Naive thymus-derived CD4-positive, alpha-beta T cell (primary cell): ENCODE measurements at regions of chr2 and their contacts with region 1.

Region 1: DNA sequence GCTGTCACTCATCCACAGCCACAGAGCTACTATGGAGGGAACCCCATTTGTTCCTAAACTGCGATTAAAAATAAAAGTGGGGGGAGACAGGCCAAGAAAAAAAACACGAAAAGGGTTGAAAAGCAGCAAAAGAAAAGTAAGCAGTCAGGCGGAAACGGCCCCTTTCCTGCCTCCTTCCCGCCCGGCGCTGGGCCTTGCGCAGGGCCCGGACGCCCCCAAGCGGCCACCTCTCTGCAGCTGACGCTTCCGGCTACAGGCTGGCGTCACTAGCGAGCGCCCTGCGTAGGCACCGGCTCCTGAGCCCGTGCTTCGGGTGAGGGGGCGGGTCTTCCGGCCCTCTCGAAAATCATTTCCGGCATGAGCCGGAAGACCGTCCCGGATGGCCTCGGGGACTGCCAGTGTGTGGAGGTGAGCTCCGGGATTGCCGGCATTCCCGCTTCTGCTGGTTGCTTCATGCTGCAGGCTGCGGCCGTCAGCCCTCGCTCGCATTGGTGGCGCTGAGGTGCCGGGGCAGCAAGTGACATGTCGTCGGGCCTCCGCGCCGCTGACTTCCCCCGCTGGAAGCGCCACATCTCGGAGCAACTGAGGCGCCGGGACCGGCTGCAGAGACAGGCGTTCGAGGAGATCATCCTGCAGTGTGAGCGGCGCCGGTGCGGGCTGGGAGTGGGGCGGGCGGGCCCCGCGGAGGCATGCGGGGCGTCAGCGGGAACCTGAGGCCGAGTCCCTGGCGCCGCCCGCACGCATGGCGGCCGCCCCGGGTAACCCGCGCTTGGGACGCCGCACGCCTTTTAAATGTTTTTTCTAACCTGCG is at the start of gene ATG16L1:
- DNase-seq: peak; percentile 85 to 96 (median 95)
- ATAC-seq: peak; percentile 99
- H3K4me3 ChIP-seq: peak within 1 kb of the TSS; percentile 80
- H3K4me3 Mint-ChIP-seq: peak within 1 kb of the TSS; percentile 86 to 96 (median 92)
- H3K27ac ChIP-seq: peak within 1 kb of the TSS; percentile 81
- H3K27ac Mint-ChIP-seq: peak within 1 kb of the TSS; percentile 89 to 98 (median 93)
- H3K4me1 ChIP-seq: peaks cover 36 to 50% of the 10 kb centered on the region in 2 donors
- H3K4me1 Mint-ChIP-seq: peaks cover 47 to 81% (median 74%) of the 10 kb centered on the region in 7 donors
- H3K27me3 ChIP-seq: no peaks in the 10 kb centered on the region
- H3K27me3 Mint-ChIP-seq: no peaks in the 10 kb centered on the region
- total RNA-seq, gene ATG16L1: 61.7 to 115 (median 83.3) TPM

Region 2: GRCh38 chr2:231780909-231781797 is 1470.4 kb before region 1 on chr2 and contains the start of gene PDE6D:
- CTCF ChIA-PET with region 1: no interaction called
- POLR2A ChIA-PET with region 1: no interaction called
- intact Hi-C with region 1: loop called (anchors 1 to 5 kb)
- DNase-seq: peak; percentile 90 to 98 (median 94)
- ATAC-seq: peak; percentile 94
- H3K4me3 ChIP-seq: peak within 1 kb of the TSS; percentile 100
- H3K4me3 Mint-ChIP-seq: peak within 1 kb of the TSS; percentile 85 to 99 (median 98)
- H3K27ac ChIP-seq: peak within 1 kb of the TSS; percentile 82
- H3K27ac Mint-ChIP-seq: peak within 1 kb of the TSS; percentile 90 to 98 (median 94)
- H3K4me1 ChIP-seq: peaks cover 26 to 30% of the 10 kb centered on the region in 2 donors
- H3K4me1 Mint-ChIP-seq: peaks cover 45 to 76% (median 57%) of the 10 kb centered on the region in 7 donors
- H3K27me3 ChIP-seq: no peaks in the 10 kb centered on the region
- H3K27me3 Mint-ChIP-seq: peaks cover 0 to 5% (median 0%) of the 10 kb centered on the region in 5 donors
- total RNA-seq, gene PDE6D: 14.3 to 35.7 (median 25.2) TPM

Region 3: DNA sequence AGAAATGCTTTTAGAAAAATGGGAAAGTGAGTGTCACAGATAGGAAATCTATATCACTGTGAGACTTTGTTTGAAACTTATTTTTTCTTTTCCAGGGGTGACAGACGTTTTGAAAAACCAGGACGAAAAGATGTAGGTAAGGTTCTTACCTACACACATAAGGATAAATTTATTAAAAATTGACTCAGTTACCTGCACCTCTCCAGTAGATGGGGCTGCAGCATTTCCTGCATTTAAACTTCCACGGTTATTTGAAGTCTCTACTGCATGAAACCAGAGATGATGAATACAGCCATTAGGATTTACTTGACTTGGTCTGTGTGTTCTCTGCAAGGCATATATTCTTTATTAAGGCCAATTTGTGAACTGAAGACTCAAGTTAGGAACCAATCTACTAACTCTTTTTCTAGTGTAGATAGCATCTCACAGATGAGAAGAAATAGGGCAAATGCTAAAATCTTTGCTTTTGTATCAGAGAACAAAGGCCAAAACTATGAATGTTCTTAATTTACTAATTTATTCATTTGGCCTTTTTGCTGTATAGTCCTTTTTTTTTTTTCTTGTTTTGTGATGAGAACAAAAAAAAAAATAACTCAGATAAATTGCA is 490.1 kb before region 1 on chr2:
- CTCF ChIA-PET with region 1: no interaction called
- POLR2A ChIA-PET with region 1: interaction called, 4 read pairs
- intact Hi-C with region 1: loop called (anchors 1 kb)
- DNase-seq: peak in 7 of 9 donors; percentile 11 to 53 (median 36)
- ATAC-seq: peak; percentile 66
- H3K4me3 ChIP-seq: no peak overlapping the region
- H3K4me3 Mint-ChIP-seq: no peak overlapping the region
- H3K27ac ChIP-seq: no peak overlapping the region
- H3K27ac Mint-ChIP-seq: no peak overlapping the region
- H3K4me1 ChIP-seq: peaks cover 0 to 11% of the 10 kb centered on the region in 2 donors
- H3K4me1 Mint-ChIP-seq: peaks cover 5 to 32% (median 17%) of the 10 kb centered on the region in 7 donors
- H3K27me3 ChIP-seq: no peaks in the 10 kb centered on the region
- H3K27me3 Mint-ChIP-seq: no peaks in the 10 kb centered on the region

Region 4: GRCh38 chr2:233061591-233062450 is 189.7 kb before region 1 on chr2:
- CTCF ChIA-PET with region 1: interaction called, 3 read pairs
- POLR2A ChIA-PET with region 1: interaction called, 11 read pairs
- intact Hi-C with region 1: loop called (anchors 1 kb)
- DNase-seq: peak in 1 of 9 donors; percentile 41
- ATAC-seq: peak; percentile 32
- H3K4me3 ChIP-seq: peak overlapping the region; percentile 88
- H3K4me3 Mint-ChIP-seq: peak overlapping the region; percentile 86 to 98 (median 96)
- H3K27ac ChIP-seq: peak overlapping the region; percentile 85
- H3K27ac Mint-ChIP-seq: peak overlapping the region; percentile 90 to 99 (median 95)
- H3K4me1 ChIP-seq: peaks cover 33 to 41% of the 10 kb centered on the region in 2 donors
- H3K4me1 Mint-ChIP-seq: peaks cover 35 to 60% (median 48%) of the 10 kb centered on the region in 7 donors
- H3K27me3 ChIP-seq: no peaks in the 10 kb centered on the region
- H3K27me3 Mint-ChIP-seq: no peaks in the 10 kb centered on the region

Region 5: DNA sequence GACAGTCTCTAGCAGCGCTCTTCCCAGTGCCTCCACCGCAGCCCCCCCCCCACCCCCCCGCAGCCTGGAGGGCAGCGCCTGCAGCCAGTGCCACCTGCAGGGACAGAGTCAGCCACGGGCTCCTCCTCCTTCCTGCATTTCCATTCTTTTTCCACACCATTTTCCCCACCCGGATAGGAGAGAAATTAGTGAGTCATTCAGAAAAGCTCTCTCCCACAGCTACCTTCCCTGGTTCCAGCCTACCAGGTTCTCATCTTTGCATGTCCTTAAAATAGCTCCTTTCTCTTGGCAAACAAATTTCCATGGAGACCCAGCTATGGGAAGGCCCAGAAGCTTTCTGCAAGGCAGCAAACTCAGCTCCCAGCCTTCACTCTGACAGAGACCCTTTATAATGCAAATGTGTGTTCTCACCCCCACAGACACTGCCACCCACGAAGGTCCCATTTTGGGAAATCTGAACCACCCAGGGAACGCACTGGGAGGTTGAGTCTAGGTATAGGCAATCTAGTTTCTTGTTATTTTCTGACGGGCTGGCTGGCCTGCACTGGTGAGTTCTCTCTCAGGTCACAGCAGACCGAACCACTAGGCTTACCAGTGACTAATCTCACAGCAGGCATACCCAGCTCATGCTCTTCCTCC is 41.9 kb before region 1 on chr2:
- CTCF ChIA-PET with region 1: interaction called, 3 read pairs
- POLR2A ChIA-PET with region 1: interaction called, 3 read pairs
- intact Hi-C with region 1: loop called in 1 of 2 experiments (anchors 5 kb)
- DNase-seq: no peak
- ATAC-seq: peak; percentile 19
- H3K4me3 ChIP-seq: no peak overlapping the region
- H3K4me3 Mint-ChIP-seq: no peak overlapping the region
- H3K27ac ChIP-seq: no peak overlapping the region
- H3K27ac Mint-ChIP-seq: peak overlapping the region; percentile 9 to 95 (median 50)
- H3K4me1 ChIP-seq: no peaks in the 10 kb centered on the region
- H3K4me1 Mint-ChIP-seq: peaks cover 5 to 22% (median 10%) of the 10 kb centered on the region in 7 donors
- H3K27me3 ChIP-seq: no peaks in the 10 kb centered on the region
- H3K27me3 Mint-ChIP-seq: no peaks in the 10 kb centered on the region

Region 6: DNA sequence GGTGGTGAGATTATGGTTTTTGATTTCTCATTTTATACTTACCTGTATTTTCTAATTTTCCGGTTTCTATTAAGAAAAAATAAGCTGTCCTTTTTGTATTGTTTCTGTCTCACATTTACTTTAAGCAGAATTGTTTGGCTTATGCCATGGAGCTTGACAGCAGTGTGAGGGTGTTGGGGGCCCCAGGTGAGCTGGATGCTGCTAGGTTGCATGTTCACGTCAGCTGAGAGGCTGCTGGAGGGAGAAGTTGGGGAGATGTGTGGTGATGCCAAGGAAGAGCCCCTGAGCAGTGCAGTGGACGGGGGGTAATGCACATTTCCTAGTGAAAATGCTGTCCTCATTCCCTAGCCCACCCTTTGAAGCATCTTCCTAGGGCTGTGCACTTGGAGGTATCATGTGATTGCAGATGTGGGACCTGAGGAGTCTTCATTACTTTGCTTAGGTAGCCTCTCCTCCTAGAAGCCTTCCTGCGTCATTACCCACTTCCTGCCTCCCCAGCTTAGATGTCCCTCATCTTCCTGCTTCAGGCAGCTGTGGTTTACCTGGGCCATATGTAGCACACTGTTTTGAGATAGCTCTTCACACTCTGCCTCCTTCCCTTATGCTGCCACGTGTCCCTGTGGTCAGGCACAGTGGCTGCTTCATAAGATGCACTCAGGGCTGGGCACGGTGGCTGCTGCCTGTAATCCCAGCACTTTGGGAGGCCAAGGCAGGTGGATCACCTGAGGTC is 16.2 kb after region 1 on chr2:
- CTCF ChIA-PET with region 1: interaction called, 18 read pairs
- POLR2A ChIA-PET with region 1: interaction called, 46 read pairs
- intact Hi-C with region 1: loop called (anchors 1 kb)
- DNase-seq: peak; percentile 49 to 95 (median 91)
- ATAC-seq: peak; percentile 97
- H3K4me3 ChIP-seq: peak overlapping the region; percentile 40
- H3K4me3 Mint-ChIP-seq: peak overlapping the region; percentile 38 to 84 (median 76)
- H3K27ac ChIP-seq: peak overlapping the region; percentile 79
- H3K27ac Mint-ChIP-seq: peak overlapping the region; percentile 95 to 100 (median 99)
- H3K4me1 ChIP-seq: peaks cover 57 to 62% of the 10 kb centered on the region in 2 donors
- H3K4me1 Mint-ChIP-seq: peaks cover 39 to 81% (median 75%) of the 10 kb centered on the region in 7 donors
- H3K27me3 ChIP-seq: no peaks in the 10 kb centered on the region
- H3K27me3 Mint-ChIP-seq: no peaks in the 10 kb centered on the region

Region 7: DNA sequence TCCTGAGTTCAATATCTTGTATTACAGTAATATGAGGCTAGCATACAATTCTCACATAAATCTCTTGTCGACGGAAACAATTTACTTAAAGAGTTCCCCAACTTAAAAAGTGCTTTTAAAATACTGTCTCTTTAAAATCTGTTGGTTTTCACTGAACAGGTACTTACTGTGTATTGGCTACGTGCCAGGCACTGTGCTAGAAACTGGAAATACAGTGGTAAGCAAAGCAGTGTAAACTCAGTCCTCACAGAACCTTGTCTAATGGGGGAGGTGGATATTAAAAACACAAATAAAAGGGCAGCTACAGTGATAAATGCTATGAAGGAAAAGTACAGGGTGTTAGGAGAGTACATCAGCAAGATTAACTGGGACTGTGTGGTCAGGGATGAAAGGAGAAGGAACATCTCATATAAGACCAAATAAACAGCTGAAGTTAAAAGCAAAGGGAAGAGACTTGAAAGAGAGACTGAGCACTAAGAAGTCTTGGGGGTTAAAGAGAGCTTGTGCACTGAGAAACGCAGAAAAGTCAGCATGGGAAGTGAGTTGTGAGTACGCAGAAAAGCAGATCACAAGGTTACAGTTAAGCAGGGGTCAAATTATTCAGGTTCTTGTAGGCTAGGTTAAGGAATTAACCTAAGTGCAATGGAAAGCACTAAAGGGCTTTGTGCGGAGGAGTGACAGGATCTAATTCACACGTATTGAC is 262.6 kb after region 1 on chr2:
- CTCF ChIA-PET with region 1: no interaction called
- POLR2A ChIA-PET with region 1: no interaction called
- intact Hi-C with region 1: no loop called
- DNase-seq: no peak
- ATAC-seq: no peak
- H3K4me3 ChIP-seq: no peak overlapping the region
- H3K4me3 Mint-ChIP-seq: no peak overlapping the region
- H3K27ac ChIP-seq: no peak overlapping the region
- H3K27ac Mint-ChIP-seq: no peak overlapping the region
- H3K4me1 ChIP-seq: no peaks in the 10 kb centered on the region
- H3K4me1 Mint-ChIP-seq: peaks cover 0 to 5% (median 0%) of the 10 kb centered on the region in 7 donors
- H3K27me3 ChIP-seq: no peaks in the 10 kb centered on the region
- H3K27me3 Mint-ChIP-seq: no peaks in the 10 kb centered on the region

Region 8: GRCh38 chr2:233711312-233712008 is 459.9 kb after region 1 on chr2:
- CTCF ChIA-PET with region 1: no interaction called
- POLR2A ChIA-PET with region 1: no interaction called
- intact Hi-C with region 1: loop called in 1 of 2 experiments (anchors 5 kb)
- DNase-seq: peak; percentile 16 to 66 (median 48)
- ATAC-seq: peak; percentile 75
- H3K4me3 ChIP-seq: no peak overlapping the region
- H3K4me3 Mint-ChIP-seq: no peak overlapping the region
- H3K27ac ChIP-seq: no peak overlapping the region
- H3K27ac Mint-ChIP-seq: peak overlapping the region in 1 of 9 donors; percentile 17
- H3K4me1 ChIP-seq: no peaks in the 10 kb centered on the region
- H3K4me1 Mint-ChIP-seq: peaks cover 0 to 5% (median 0%) of the 10 kb centered on the region in 7 donors
- H3K27me3 ChIP-seq: peaks cover 0 to 6% of the 10 kb centered on the region in 2 donors
- H3K27me3 Mint-ChIP-seq: peaks cover 21 to 40% (median 23%) of the 10 kb centered on the region in 5 donors

Region 9: DNA sequence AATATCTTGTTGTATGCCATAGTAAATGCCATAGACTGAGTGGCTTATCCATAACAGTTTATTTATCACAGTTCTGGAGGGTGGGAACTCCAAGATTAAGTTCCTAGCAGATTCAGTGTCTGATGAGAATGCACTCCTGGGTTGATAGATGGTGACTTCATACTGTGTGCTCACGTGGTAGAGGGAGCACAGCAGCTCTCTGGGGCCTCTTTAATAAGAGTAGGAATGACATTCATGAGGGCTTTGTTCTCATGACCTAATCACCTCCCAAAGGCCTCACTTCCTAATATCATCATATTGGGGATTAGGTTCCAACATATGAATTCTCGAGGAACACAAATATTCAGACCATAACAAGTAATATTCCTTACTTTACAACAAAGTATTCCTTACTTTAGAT is 1602.2 kb after region 1 on chr2:
- CTCF ChIA-PET with region 1: no interaction called
- POLR2A ChIA-PET with region 1: no interaction called
- intact Hi-C with region 1: no loop called
- DNase-seq: no peak
- ATAC-seq: no peak
- H3K4me3 ChIP-seq: no peak overlapping the region
- H3K4me3 Mint-ChIP-seq: no peak overlapping the region
- H3K27ac ChIP-seq: no peak overlapping the region
- H3K27ac Mint-ChIP-seq: no peak overlapping the region
- H3K4me1 ChIP-seq: no peaks in the 10 kb centered on the region
- H3K4me1 Mint-ChIP-seq: no peaks in the 10 kb centered on the region
- H3K27me3 ChIP-seq: no peaks in the 10 kb centered on the region
- H3K27me3 Mint-ChIP-seq: peaks cover under 1 to 29% (median 7%) of the 10 kb centered on the region in 5 donors